WTC11 (cell line): ENCODE measurements at regions of chr3 and their contacts with region 1.

Region 1: DNA sequence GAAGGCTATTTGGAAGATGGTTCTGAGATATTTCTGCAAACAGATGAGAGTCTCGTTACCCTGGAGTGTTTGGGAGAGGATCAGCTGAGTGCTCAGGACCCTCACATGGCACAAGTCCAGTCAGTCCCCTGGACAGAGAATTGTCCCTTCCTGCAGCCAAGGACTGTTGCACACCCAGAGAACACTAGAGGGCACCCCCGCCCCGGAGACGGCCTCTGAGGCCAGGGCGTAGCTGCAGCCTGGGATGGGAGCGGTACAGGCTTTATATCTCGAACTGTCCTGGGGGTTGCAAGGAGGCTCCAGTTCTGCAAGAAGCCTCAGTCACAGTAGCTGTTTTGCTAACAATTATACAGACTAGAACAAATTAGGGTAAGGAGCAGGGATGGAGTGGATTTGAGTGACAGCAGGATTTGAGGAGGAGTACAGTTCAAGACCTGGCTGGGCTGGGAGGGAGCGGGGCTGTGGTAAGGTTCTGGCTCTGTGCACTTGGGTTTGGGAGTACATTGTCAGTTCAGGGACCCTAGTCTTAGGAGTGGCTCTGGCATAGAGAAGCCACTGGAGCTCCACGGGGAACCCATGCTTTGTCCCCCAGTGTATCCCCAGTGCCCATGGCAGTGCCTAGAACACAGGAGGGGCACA is 67.6 kb upstream of the HACD2 start:
- DNase-seq: peak; percentile 89
- ATAC-seq: peak; percentile 96
- H3K4me3 Mint-ChIP-seq: no peak overlapping the region
- H3K27ac Mint-ChIP-seq: 0 out of 2 replicates have a peak overlapping the region, but pooled peaks have one; percentile 14
- H3K4me1 Mint-ChIP-seq: peaks cover 19% of the 10 kb centered on the region
- H3K27me3 Mint-ChIP-seq: no peaks in the 10 kb centered on the region; the same call in 1 of the 2 replicates
- CTCF ChIP-seq: peak; percentile 66

Region 2: GRCh38 chr3:123469323-123469995 is 183.0 kb before region 1 on chr3:
- CTCF ChIA-PET with region 1: no interaction called
- POLR2A ChIA-PET with region 1: no interaction called
- DNase-seq: no peak
- ATAC-seq: no peak
- H3K4me3 Mint-ChIP-seq: no peak overlapping the region
- H3K27ac Mint-ChIP-seq: no peak overlapping the region
- H3K4me1 Mint-ChIP-seq: no peaks in the 10 kb centered on the region
- H3K27me3 Mint-ChIP-seq: no peaks in the 10 kb centered on the region; the same call in 1 of the 2 replicates
- CTCF ChIP-seq: no peak

Region 3: DNA sequence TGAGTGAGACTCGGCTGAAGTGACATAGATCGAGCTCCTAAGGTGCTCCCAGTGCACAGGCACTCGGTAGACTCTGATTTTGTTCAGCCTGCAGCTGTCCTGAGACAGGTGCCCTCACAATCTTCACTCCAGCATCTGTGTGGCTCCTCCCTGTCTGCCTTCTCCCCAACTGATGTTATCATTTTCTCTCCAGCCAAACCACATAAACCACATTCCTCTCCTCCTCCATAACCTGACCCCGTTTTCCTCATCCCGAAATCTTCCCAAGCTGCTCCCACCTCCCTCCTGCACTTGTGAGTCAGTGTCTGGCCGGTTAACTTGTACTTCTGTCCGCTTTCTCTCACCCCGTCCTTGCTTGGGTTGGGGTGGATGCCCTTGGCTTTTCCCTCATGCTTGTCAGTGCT is 25.6 kb after region 1 on chr3:
- CTCF ChIA-PET with region 1: interaction called, 21 read pairs
- POLR2A ChIA-PET with region 1: no interaction called
- DNase-seq: no peak
- ATAC-seq: no peak
- H3K4me3 Mint-ChIP-seq: no peak overlapping the region
- H3K27ac Mint-ChIP-seq: peak overlapping the region; percentile 23; the same call in 1 of the 2 replicates
- H3K4me1 Mint-ChIP-seq: peaks cover 5% of the 10 kb centered on the region
- H3K27me3 Mint-ChIP-seq: no peaks in the 10 kb centered on the region
- CTCF ChIP-seq: no peak

Region 4: GRCh38 chr3:123694366-123695145 is 42.1 kb after region 1 on chr3:
- CTCF ChIA-PET with region 1: interaction called, 62 read pairs
- POLR2A ChIA-PET with region 1: no interaction called
- DNase-seq: no peak
- ATAC-seq: peak; percentile 20
- H3K4me3 Mint-ChIP-seq: no peak overlapping the region
- H3K27ac Mint-ChIP-seq: no peak overlapping the region
- H3K4me1 Mint-ChIP-seq: peaks cover 27% of the 10 kb centered on the region
- H3K27me3 Mint-ChIP-seq: no peaks in the 10 kb centered on the region
- CTCF ChIP-seq: no peak

Region 5: GRCh38 chr3:123700791-123701722 is 48.6 kb after region 1 on chr3:
- CTCF ChIA-PET with region 1: interaction called, 62 read pairs
- POLR2A ChIA-PET with region 1: no interaction called
- DNase-seq: no peak
- ATAC-seq: no peak
- H3K4me3 Mint-ChIP-seq: no peak overlapping the region
- H3K27ac Mint-ChIP-seq: no peak overlapping the region
- H3K4me1 Mint-ChIP-seq: peaks cover 6% of the 10 kb centered on the region
- H3K27me3 Mint-ChIP-seq: no peaks in the 10 kb centered on the region
- CTCF ChIP-seq: no peak

Region 6: DNA sequence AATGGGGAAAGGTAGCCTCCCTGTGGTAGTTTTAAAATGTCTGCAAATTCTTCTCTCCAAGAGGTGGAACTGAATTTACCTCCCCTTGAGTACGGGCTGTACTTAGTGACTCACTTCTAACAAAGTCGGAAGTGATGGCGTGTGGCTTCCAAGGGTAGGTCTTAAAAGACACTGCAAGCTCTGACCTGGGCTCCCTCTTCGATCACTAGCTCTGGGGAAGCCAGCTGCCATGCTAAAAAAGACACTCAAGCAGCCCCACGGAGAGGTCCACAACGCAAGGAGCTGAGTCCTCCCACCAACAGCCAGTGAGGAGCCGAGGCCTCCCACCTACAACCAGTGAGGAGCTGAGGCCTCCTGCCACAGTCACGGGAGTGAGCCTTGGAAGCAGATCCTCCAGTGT is 54.4 kb after region 1 on chr3:
- CTCF ChIA-PET with region 1: interaction called, 51 read pairs
- POLR2A ChIA-PET with region 1: no interaction called
- DNase-seq: no peak
- ATAC-seq: no peak
- H3K4me3 Mint-ChIP-seq: no peak overlapping the region
- H3K27ac Mint-ChIP-seq: no peak overlapping the region
- H3K4me1 Mint-ChIP-seq: peaks cover 7% of the 10 kb centered on the region
- H3K27me3 Mint-ChIP-seq: no peaks in the 10 kb centered on the region
- CTCF ChIP-seq: no peak